ENCODE measurements at regions of chr17 and their contacts with region 1.

Region 1: DNA sequence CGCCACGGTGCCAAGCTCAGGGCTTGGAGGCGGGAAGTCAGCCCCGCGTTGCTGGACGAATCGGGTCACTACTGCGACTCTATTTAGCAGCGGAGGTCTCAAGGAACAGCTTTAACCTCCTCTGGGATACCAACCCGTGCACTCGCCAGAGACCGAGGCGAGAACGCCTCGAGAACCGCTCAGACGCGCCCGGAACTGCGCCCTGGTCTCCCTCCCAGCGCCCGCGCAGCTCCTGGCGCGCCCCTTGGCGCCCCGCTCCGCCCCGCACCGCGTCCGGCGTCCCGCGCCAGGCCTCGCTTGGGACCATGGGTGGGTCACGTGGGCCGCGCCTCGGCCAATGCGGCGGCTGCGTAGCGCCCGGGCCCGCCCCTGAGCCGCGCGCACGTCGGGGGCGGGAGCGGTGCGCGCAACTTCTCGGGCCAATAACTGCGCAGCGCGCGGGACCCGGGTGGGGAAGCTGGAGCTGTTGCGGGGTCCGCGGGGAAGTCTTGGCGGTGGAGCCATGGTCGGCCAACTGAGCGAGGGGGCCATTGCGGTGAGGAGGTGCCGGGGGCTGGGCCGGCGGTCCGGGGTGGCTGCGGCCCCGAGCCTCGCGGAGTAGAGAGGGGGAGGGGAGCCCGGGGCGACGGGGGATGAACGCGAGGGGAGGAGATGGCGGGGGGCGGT is at the starts of genes RPA1 and SMYD4:
- DNase-seq: peak; percentile 95
- ATAC-seq: peak; percentile 98
- H3K4me3 Mint-ChIP-seq: peak within 1 kb of the TSS; percentile 98
- H3K27ac Mint-ChIP-seq: peak within 1 kb of the TSS; percentile 93
- H3K4me1 Mint-ChIP-seq: peaks cover 59% of the 10 kb centered on the region
- H3K27me3 Mint-ChIP-seq: no peaks in the 10 kb centered on the region
- total RNA-seq, gene RPA1: 134 to 191 TPM
- total RNA-seq, gene SMYD4: 19.7 to 19.8 TPM

Region 2: GRCh38 chr17:1561400-1562175 is 268.1 kb before region 1 on chr17:
- CTCF ChIA-PET with region 1: no interaction called
- POLR2A ChIA-PET with region 1: no interaction called
- intact Hi-C with region 1: loop called in 1 of 2 experiments (anchors 5 kb)
- DNase-seq: peak; percentile 64
- ATAC-seq: peak; percentile 35
- H3K4me3 Mint-ChIP-seq: peak overlapping the region; percentile 81
- H3K27ac Mint-ChIP-seq: no peak overlapping the region
- H3K4me1 Mint-ChIP-seq: peaks cover 27% of the 10 kb centered on the region
- H3K27me3 Mint-ChIP-seq: no peaks in the 10 kb centered on the region

Region 3: DNA sequence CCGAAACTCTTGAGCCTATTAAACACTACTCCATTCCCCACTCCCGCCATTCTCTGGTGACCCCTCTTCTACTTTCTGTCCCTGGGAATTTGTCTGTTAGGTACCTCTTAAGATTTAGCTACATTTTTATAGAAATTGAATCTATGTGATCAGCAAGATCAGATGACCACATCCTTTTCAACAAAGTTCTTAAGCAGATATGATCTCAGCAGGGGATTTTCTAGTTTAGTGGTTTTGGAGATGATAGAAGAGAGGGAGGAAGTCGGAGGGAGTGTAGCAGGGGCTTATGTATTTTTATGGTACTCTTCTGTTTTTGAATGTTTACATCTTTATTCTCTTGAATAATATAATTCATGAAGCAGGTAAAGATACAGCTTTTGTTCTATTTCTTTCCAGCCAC is 40.9 kb after region 1 on chr17:
- CTCF ChIA-PET with region 1: interaction called, 3 read pairs
- POLR2A ChIA-PET with region 1: interaction called, 3 read pairs
- intact Hi-C with region 1: loop called (anchors 1 to 2 kb)
- DNase-seq: no peak
- ATAC-seq: peak; percentile 68
- H3K4me3 Mint-ChIP-seq: peak overlapping the region; percentile 42
- H3K27ac Mint-ChIP-seq: peak overlapping the region; percentile 97
- H3K4me1 Mint-ChIP-seq: peaks cover 55% of the 10 kb centered on the region
- H3K27me3 Mint-ChIP-seq: no peaks in the 10 kb centered on the region

Region 4: GRCh38 chr17:2266045-2266864 is 436.5 kb after region 1 on chr17:
- CTCF ChIA-PET with region 1: no interaction called
- POLR2A ChIA-PET with region 1: no interaction called
- intact Hi-C with region 1: loop called in 1 of 2 experiments (anchors 5 kb)
- DNase-seq: peak; percentile 93
- ATAC-seq: peak; percentile 76
- H3K4me3 Mint-ChIP-seq: peak overlapping the region; percentile 72
- H3K27ac Mint-ChIP-seq: peak overlapping the region; percentile 98
- H3K4me1 Mint-ChIP-seq: peaks cover 86% of the 10 kb centered on the region
- H3K27me3 Mint-ChIP-seq: no peaks in the 10 kb centered on the region

Region 5: DNA sequence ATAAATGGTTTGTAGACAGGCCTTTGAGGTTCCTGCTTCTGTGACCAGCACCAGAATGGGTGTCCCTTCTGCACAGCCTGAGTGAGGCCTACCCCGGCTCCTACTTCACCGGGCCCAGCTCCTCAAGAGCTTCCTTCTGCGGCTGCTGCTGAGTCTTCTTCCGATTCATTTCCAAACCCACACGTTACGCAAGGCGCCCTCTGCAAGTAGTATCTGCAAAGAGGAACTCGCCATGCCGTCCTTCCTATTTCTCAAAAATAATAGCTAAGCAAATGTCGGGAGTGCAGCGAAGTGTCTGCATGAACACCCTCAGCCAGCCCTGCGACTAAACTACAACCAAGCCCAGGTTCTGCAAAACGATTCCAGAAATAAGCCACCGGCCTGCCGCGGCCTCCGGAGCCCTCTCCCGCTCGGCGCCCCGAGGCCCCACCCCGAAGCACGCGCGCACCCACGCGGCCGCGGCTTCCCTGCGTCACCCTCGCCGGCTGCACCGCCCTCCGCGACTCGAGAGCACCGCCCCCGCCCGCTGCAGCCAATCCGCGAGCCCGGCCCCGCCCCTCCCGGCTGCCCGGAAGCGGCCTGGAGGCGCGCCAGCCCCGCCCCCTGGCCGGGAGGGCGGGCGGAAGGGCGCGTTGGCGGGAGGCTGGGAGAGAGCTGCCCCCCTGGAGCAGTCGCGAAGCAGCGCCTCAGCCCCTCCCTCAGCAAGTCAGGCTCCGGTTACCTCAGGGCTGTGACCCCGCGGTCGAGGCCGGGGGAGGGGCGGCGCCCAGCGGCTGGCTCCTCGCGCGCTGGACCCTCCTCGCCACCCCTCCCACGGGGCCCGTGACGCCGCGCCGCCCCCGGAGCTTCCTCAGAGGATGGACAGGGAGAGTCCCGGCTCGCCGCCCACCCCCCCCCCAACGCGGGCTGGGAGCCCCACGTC is 562.8 kb after region 1 on chr17:
- CTCF ChIA-PET with region 1: no interaction called
- POLR2A ChIA-PET with region 1: interaction called, 3 read pairs
- intact Hi-C with region 1: loop called in 1 of 2 experiments (anchors 1 kb)
- DNase-seq: peak; percentile 99
- ATAC-seq: peak; percentile 72
- H3K4me3 Mint-ChIP-seq: peak overlapping the region; percentile 80
- H3K27ac Mint-ChIP-seq: peak overlapping the region; percentile 94
- H3K4me1 Mint-ChIP-seq: peaks cover 52% of the 10 kb centered on the region
- H3K27me3 Mint-ChIP-seq: no peaks in the 10 kb centered on the region

Region 6: GRCh38 chr17:3723556-3724369 is 1894.0 kb after region 1 on chr17 and contains the start of gene HASPIN:
- CTCF ChIA-PET with region 1: no interaction called
- POLR2A ChIA-PET with region 1: no interaction called
- intact Hi-C with region 1: loop called in 1 of 2 experiments (anchors 10 kb)
- DNase-seq: peak; percentile 96
- ATAC-seq: peak; percentile 86
- H3K4me3 Mint-ChIP-seq: peak within 1 kb of the TSS; percentile 83
- H3K27ac Mint-ChIP-seq: peak within 1 kb of the TSS; percentile 93
- H3K4me1 Mint-ChIP-seq: peaks cover 58% of the 10 kb centered on the region
- H3K27me3 Mint-ChIP-seq: no peaks in the 10 kb centered on the region
- total RNA-seq, gene HASPIN: 21.0 to 25.2 TPM

Measured in activated CD4-positive, alpha-beta T cell treated with anti-CD3 and anti-CD28 coated beads for 36 hours (primary cell).